PC-9 (cell line): ENCODE measurements at regions of chr16 and their contacts with region 1.

Region 1: DNA sequence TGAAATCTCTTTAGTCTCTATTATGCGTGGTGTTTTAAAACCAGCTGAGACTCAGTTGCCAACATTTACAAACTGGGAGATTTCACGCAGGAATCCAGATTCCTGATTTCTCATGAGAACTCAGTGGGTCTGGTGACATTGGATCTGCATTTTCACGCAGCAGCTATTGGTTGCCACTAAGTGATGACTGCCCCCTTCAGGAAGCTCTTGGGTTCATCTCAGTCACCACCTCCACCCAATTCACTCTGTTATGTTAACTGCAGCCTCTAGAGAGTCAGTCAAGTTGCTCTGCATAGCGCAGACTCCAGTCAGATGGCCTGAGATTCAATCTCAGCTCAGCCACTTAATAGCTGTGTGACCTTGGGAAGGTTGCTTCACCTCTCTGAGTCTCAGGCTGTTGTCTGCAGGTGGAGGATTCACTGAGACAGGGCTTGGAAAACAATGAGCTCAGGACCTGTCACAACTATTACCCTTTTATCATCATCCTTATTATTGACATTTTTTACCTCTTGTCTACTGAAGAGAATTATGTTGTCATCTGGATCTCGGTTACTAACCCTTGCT is 6.4 kb downstream of the SHISA9 start:
- DNase-seq: no peak
- H3K4me3 ChIP-seq: no peak overlapping the region
- H3K27ac ChIP-seq: no peak overlapping the region
- H3K4me1 ChIP-seq: peaks cover 25% of the 10 kb centered on the region
- H3K27me3 ChIP-seq: no peaks in the 10 kb centered on the region
- CTCF ChIP-seq: peak; percentile 47; the same call in 1 of the 2 replicates

Region 2: GRCh38 chr16:12651765-12652512 is 255.8 kb before region 1 on chr16:
- CTCF ChIA-PET with region 1: no interaction called
- POLR2A ChIA-PET with region 1: interaction called, 10 read pairs
- intact Hi-C with region 1: no loop called
- DNase-seq: no peak
- H3K4me3 ChIP-seq: no peak overlapping the region
- H3K27ac ChIP-seq: no peak overlapping the region
- H3K4me1 ChIP-seq: no peaks in the 10 kb centered on the region
- H3K27me3 ChIP-seq: no peaks in the 10 kb centered on the region
- CTCF ChIP-seq: no peak

Region 3: DNA sequence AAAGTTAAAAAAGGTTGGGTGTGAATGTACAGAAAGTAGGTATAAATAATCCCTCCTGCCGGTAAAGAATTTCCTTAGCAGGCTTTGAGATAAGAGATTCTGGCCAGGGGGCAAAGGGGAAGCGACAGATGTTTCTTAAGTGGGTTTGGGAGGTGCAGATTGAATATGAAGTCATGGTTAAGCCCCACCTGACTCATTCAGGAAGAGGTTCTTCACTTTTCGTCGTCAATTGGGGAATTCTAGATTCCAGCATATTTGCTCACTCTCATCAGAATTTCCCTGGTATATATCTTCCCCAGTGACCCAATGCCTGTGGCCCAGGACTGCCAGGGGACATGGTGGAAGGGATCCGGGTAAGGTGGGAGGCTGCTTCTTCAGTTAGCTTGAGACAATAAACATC is 231.9 kb before region 1 on chr16:
- CTCF ChIA-PET with region 1: no interaction called
- POLR2A ChIA-PET with region 1: no interaction called
- intact Hi-C with region 1: no loop called
- DNase-seq: no peak
- H3K4me3 ChIP-seq: no peak overlapping the region
- H3K27ac ChIP-seq: no peak overlapping the region
- H3K4me1 ChIP-seq: no peaks in the 10 kb centered on the region
- H3K27me3 ChIP-seq: no peaks in the 10 kb centered on the region
- CTCF ChIP-seq: no peak

Region 4: DNA sequence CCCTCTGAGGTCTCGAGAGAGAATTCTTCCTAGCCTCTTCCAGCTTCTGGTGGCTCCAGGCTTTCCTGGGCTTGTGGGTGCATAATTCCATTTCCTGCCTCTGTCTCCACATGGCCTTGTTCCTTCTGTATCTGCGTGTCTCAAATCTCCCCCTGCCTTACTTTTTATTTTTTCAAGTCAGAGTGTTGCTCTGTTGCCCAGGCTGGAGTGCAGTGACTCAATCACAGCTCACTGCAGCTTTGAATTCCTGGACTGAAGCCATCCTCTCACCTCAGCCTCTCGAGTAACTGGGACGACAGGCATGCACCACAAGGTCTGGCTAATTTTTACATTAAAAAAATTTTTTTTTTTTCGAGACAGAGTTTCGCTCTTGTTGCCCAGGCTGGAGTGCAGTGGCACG is 114.2 kb after region 1 on chr16:
- CTCF ChIA-PET with region 1: interaction called, 13 read pairs
- POLR2A ChIA-PET with region 1: no interaction called
- intact Hi-C with region 1: no loop called
- DNase-seq: peak; percentile 62 to 77
- H3K4me3 ChIP-seq: no peak overlapping the region
- H3K27ac ChIP-seq: 0 out of 2 replicates have a peak overlapping the region, but pooled peaks have one; percentile 14
- H3K4me1 ChIP-seq: peaks cover 18% of the 10 kb centered on the region
- H3K27me3 ChIP-seq: no peaks in the 10 kb centered on the region
- CTCF ChIP-seq: no peak